ENCODE measurements at regions of chr7 and their contacts with region 1.

Region 1: GRCh38 chr7:155653803-155654202 is 9.3 kb downstream of the RBM33 start:
- DNase-seq: no peak
- H3K4me3 Mint-ChIP-seq: peak overlapping the region; percentile 7
- H3K27ac Mint-ChIP-seq: peak overlapping the region; percentile 25
- H3K4me1 Mint-ChIP-seq: peaks cover 51% of the 10 kb centered on the region
- H3K27me3 Mint-ChIP-seq: no peaks in the 10 kb centered on the region
- CTCF ChIP-seq: no peak

Region 2: DNA sequence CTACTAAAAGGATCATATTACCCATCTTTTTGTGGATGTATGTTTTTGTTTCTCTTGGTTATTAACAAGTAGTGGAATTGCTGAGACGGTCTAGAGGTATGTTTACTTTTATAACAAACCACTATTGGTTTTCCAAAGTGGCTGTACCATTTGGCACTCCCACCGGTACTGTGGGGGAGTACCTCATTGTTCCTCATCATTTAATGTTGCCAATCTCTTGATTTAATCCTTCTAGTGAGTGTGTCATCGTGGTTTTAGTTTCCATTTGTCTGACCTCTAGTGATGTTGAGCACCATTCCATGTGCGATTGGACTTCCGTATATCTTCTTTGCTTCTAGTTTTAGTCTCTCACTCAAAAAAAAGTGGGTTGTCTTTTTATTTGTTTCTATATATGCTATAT is 41.0 kb after region 1 on chr7:
- CTCF ChIA-PET with region 1: no interaction called
- intact Hi-C with region 1: loop called (anchors 5 kb)
- DNase-seq: no peak
- H3K4me3 Mint-ChIP-seq: no peak overlapping the region
- H3K27ac Mint-ChIP-seq: no peak overlapping the region
- H3K4me1 Mint-ChIP-seq: peaks cover 32% of the 10 kb centered on the region
- H3K27me3 Mint-ChIP-seq: no peaks in the 10 kb centered on the region
- CTCF ChIP-seq: no peak

Measured in Calu3 (cell line).